AG04449 (cell line): ENCODE measurements at regions of chr19 and their contacts with region 1.

Region 1: DNA sequence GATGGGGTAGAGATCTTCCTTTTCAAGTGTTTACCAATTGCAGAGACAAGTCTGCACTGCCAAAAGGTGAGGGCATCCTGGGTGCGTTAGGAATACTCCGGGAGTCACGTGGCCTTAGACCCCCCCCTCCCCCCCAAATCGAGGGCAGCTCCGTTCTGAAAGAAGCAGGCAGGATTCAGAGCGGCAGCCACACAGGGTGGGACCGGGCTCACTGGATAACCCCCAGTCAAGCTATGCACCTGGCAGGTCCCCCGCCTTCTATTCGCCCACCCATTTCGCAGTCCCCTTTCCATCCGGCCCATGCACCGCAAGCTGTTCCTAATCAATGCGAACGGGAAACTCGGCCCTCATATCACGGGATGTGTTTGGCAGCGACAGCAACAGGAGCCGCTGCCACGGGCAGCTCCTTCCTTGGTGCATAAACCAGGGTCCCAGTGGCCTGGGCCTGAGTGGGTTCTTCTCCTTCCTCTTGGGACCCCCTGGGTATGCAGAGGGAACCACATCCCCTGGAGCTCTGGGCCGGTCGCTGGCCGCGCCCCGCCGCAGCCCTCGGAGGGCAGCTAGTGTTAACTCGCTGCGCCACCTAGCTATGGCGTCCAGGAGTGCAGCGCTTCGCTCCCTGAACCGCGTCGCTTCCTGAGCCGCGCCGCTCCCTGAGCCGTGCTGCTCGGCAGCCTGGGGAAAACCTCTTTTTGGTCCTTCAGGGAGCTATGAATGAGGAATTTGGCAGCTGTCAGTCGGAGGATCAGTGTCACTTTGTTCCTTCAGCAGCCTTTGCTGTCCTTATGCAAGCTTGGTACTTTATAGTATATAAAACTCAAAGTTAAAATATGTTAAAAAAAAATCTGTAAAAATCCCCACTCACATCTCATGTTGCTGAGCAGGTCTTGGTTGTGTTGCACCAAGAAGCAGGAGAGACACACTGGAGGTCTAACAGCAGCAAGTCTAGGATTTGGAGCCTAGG is 41.4 kb downstream of the LYL1 start:
- DNase-seq: no peak
- H3K4me3 ChIP-seq: peak overlapping the region; percentile 36
- CTCF ChIP-seq: peak; percentile 98

Region 2: GRCh38 chr19:12994701-12995595 is 66.3 kb before region 1 on chr19 and contains the start of gene NFIX:
- CTCF ChIA-PET with region 1: interaction called, 25 read pairs
- POLR2A ChIA-PET with region 1: no interaction called
- DNase-seq: no peak
- H3K4me3 ChIP-seq: peak within 1 kb of the TSS; percentile 80
- CTCF ChIP-seq: no peak

Region 3: GRCh38 chr19:13012690-13013608 is 48.3 kb before region 1 on chr19:
- CTCF ChIA-PET with region 1: interaction called, 17 read pairs
- POLR2A ChIA-PET with region 1: no interaction called
- DNase-seq: no peak
- H3K4me3 ChIP-seq: peak overlapping the region; percentile 48
- CTCF ChIP-seq: no peak

Region 4: GRCh38 chr19:13033819-13034611 is 27.2 kb before region 1 on chr19:
- CTCF ChIA-PET with region 1: interaction called, 427 read pairs
- POLR2A ChIA-PET with region 1: interaction called, 12 read pairs
- DNase-seq: no peak
- H3K4me3 ChIP-seq: no peak overlapping the region
- CTCF ChIP-seq: peak; percentile 67